MCF 10A (cell line): ENCODE measurements at regions of chr15 and their contacts with region 1.

Region 1: DNA sequence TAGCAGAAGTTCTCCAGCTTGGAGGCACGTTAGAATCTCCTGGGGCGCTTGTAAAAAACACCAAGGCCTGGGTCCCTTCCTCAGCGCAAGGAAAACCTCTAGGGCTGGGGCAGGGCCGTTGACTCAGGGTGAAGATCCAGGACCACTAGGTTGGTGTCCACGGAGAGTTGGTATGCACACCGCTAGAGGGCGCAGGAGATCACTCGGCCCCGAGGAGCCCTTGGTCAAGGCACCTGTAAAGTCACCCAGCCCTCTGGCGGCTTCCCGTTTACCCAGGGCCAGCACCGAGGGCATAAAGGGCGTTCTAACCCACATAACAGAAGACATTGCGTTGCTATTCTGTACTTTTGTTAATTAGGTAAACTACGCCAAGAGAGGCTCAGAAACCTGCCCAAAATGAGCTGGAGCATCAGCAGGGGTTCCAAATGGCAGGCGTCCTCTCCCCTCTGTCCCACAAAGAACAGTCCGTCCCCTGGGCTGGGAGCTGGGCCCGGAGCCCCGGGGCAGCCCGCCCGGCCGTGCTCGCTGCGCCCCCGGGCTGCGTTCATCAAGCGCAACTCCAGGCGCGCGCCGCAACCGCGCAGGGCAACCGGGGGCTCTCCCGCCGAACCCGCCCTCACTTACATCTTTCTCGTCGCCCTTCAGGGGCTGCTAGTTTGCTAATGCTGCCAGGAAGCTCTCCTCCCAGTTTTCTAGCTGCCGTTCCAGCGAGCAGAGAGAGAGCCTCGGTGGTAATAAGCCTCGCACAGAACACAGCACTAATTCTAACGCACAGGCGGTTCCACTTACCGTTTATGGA is 332.1 kb downstream of the ARRDC4 start:
- DNase-seq: peak; percentile 60
- H3K4me3 Mint-ChIP-seq: no peak overlapping the region
- H3K27ac Mint-ChIP-seq: no peak overlapping the region
- H3K4me1 Mint-ChIP-seq: no peaks in the 10 kb centered on the region
- H3K27me3 Mint-ChIP-seq: peaks cover 16% of the 10 kb centered on the region
- CTCF ChIP-seq: peak; percentile 78

Region 2: DNA sequence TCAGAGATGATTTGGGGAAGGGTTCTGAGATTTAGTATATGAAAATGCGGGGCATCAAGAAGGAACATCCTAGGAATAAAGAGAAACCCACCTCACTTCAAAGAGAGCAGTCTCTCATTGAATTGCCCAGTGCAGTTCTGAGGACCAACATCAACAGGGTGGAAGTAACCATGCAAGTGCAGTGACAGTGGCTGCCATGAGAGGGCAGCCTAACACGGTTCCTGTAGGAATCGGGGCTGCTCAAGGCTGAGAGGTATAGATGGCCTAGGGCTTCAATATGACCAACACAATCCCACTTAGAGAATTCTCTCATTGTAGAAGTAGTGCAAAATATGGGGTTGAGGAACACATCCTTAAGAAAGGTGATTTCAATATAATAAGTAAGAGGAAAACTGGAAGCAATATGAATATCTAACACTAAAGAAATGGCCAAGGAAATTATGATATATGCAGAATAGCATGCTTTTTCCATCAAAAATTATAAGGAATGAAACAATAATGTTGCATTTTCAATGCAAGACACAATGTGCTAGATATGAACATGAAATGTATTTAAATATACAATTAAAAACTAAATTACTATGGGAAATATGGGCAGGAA is 383.2 kb before region 1 on chr15:
- CTCF ChIA-PET with region 1: interaction called, 9 read pairs
- POLR2A ChIA-PET with region 1: no interaction called
- intact Hi-C with region 1: loop called (anchors 2 kb)
- DNase-seq: peak; percentile 66
- H3K4me3 Mint-ChIP-seq: no peak overlapping the region
- H3K27ac Mint-ChIP-seq: no peak overlapping the region
- H3K4me1 Mint-ChIP-seq: peaks cover 8% of the 10 kb centered on the region
- H3K27me3 Mint-ChIP-seq: no peaks in the 10 kb centered on the region
- CTCF ChIP-seq: peak; percentile 93

Region 3: GRCh38 chr15:98276018-98276417 is 16.6 kb before region 1 on chr15:
- CTCF ChIA-PET with region 1: interaction called, 16 read pairs
- POLR2A ChIA-PET with region 1: no interaction called
- intact Hi-C with region 1: no loop called
- DNase-seq: no peak
- H3K4me3 Mint-ChIP-seq: no peak overlapping the region
- H3K27ac Mint-ChIP-seq: no peak overlapping the region
- H3K4me1 Mint-ChIP-seq: no peaks in the 10 kb centered on the region
- H3K27me3 Mint-ChIP-seq: no peaks in the 10 kb centered on the region
- CTCF ChIP-seq: no peak

Region 4: GRCh38 chr15:98375513-98376340 is 83.1 kb after region 1 on chr15:
- CTCF ChIA-PET with region 1: no interaction called
- POLR2A ChIA-PET with region 1: no interaction called
- intact Hi-C with region 1: no loop called
- DNase-seq: no peak
- H3K4me3 Mint-ChIP-seq: no peak overlapping the region
- H3K27ac Mint-ChIP-seq: no peak overlapping the region
- H3K4me1 Mint-ChIP-seq: no peaks in the 10 kb centered on the region
- H3K27me3 Mint-ChIP-seq: peaks cover 11% of the 10 kb centered on the region
- CTCF ChIP-seq: no peak